Spleen (tissue), 13 donors: ENCODE measurements at regions of chr13 and their contacts with region 1.

Region 1: DNA sequence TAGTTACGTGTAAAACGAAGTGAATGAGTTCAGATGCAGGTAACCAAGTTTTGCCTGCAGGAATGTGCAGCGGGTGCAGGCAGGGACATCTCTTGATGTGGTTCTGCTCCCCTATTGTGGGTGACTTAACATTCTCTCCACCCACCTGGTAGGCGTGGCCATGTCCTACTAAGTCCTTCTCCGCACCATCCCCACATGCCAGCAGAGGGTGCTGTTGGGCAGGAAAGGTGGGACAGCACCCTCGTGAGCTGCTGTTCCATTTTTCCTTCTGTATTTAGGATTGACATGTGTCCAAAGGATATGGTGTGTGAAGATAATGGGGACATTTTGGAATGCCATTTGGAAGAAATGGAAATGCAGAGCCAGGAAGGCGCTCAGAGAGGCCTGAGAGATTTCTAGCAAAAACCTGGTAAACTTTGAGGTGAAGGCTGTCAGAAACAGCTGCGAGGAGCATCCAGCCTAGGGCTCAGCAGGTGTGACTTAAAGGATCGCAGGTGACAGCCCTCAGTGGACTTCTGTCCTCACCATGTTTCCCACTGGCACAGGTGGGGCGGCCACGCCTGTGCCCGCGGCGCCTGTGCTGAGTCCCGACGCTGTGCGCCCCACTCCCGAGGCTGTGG is 26.2 kb upstream of the MCF2L start:
- DNase-seq: peak; percentile 97
- H3K4me3 ChIP-seq: peak overlapping the region; percentile 38 to 78 (median 54)
- H3K27ac ChIP-seq: peak overlapping the region in 2 of 8 donors; percentile 47 to 54
- H3K4me1 ChIP-seq: peaks cover 3 to 21% (median 16%) of the 10 kb centered on the region in 6 donors
- H3K27me3 ChIP-seq: peaks cover 0 to 46% (median 11%) of the 10 kb centered on the region in 7 donors
- CTCF ChIP-seq: peak; percentile 95 to 99 (median 97)
- POLR2A ChIP-seq: no peak

Region 2: GRCh38 chr13:112767506-112768471 is 175.0 kb before region 1 on chr13:
- intact Hi-C with region 1: no loop called
- DNase-seq: no peak
- H3K4me3 ChIP-seq: peak overlapping the region in 1 of 8 donors; percentile 45
- H3K27ac ChIP-seq: peak overlapping the region in 2 of 8 donors; percentile 36 to 53
- H3K4me1 ChIP-seq: peaks cover 16 to 45% (median 25%) of the 10 kb centered on the region in 6 donors
- H3K27me3 ChIP-seq: no peaks in the 10 kb centered on the region
- CTCF ChIP-seq: no peak
- POLR2A ChIP-seq: no peak

Region 3: GRCh38 chr13:113022391-113023216 is 79.8 kb after region 1 on chr13:
- intact Hi-C with region 1: loop called (anchors 5 kb)
- DNase-seq: no peak
- H3K4me3 ChIP-seq: peak overlapping the region in 1 of 8 donors; percentile 7
- H3K27ac ChIP-seq: peak overlapping the region in 2 of 8 donors; percentile 16 to 41
- H3K4me1 ChIP-seq: peaks cover 0 to 20% (median 10%) of the 10 kb centered on the region in 6 donors
- H3K27me3 ChIP-seq: peaks cover 0 to 19% (median 0%) of the 10 kb centered on the region in 7 donors
- CTCF ChIP-seq: no peak
- POLR2A ChIP-seq: no peak

Region 4: DNA sequence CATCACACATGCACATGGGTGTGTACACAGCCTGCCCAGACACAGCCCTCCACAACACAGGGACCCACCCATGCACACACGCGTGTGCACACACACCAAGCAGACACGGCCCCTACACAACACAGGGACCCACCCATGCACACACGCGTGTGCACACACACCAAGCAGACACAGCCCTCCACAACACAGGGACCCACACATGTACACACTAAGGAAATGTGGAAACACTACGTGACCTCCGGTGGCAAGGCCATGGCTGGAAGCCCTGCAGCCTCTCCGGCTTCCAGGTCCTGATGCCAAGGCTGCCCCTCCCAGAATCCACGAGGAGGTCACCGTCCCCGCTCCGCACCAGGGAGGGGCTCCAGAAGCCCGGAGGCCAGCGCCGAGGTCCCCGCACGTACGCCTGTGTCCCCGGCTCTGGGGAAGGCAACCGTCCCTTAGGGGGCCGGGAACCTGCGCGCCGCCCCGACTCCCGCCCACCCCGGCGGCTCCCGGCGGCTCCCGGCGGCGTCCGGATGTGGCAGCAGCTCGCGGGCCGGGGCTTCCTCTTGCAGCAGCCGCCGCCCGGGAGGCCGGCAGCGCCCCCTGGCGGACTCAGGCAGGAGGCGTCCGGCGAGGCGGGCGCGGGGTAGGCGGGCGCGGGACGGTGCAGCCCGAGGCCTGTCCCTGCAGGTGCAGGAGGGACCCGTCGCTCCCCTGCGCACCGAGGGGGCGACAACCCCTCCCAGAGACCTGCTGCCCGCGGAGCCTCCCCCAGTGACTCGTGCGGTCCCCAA is 451.0 kb after region 1 on chr13:
- intact Hi-C with region 1: loop called (anchors 5 kb)
- DNase-seq: peak; percentile 97
- H3K4me3 ChIP-seq: peak overlapping the region; percentile 49 to 89 (median 56)
- H3K27ac ChIP-seq: peak overlapping the region in 7 of 8 donors; percentile 54 to 84 (median 74)
- H3K4me1 ChIP-seq: peaks cover 5 to 21% (median 16%) of the 10 kb centered on the region in 6 donors
- H3K27me3 ChIP-seq: no peaks in the 10 kb centered on the region
- CTCF ChIP-seq: peak in 10 of 11 experiments; percentile 31 to 98 (median 92)
- POLR2A ChIP-seq: no peak